ENCODE measurements at regions of chr1 and their contacts with region 1.

Region 1: DNA sequence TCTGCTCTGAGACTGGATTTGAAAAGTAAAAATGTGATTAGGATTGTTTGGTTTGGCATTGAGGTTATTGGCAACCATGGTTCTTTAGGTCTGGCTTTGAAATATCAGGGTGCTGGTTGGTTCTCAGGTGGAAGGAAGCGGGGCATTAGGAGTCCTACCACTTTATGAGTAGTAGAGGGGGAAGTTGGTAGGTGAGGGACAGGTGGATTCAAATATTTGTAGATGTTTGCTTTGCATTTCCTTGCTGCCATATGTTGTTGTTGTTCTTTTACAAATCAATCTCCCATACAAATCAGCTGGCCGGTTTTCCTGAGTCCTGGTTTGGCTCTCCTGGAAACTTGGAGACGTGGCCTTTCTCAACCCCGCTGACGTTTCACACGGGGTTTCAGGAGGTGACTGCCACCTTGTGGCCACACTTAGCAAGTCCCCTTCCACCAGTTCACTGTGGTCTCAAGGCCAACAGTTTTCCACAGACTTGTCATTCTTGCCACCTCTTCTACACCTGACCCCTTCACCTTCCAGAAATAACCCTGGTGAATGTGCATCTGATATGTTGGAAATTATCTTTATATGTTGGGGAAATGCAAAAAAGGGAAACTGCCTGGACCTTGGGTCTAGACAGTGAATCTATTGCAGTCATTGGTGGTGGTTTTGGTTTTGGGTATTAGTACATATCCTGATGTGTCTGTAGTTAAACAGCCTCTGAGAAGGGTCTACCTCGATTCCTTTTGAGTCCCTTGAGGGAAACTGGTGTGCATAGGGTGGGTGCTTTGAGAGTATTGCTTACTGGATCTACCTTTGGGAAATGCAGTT is 127.0 kb upstream of the KIAA0040 start:
- DNase-seq: peak; percentile 71
- CTCF ChIP-seq: peak; percentile 90

Region 2: DNA sequence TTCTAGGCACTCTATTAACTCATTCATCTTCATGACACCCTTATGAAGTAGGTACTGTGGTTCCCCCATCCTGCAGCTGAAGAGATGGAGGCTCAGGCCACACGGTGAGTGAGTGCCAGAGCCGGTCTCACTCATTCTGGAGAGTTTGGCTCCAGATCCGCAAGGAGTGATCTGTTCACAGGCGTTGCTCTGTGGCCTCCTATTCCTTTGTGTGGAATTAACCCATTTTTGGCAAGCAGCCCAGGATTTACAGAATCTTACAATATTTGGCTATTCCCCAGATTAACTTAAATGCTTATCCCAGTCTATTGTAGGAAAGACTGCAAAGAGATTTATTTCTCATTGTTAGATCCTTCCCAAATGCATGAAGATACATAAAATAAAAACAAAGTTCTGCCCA is 156.7 kb before region 1 on chr1:
- CTCF ChIA-PET with region 1: interaction called, 44 read pairs
- POLR2A ChIA-PET with region 1: no interaction called
- DNase-seq: no peak
- CTCF ChIP-seq: no peak

Region 3: GRCh38 chr1:175174309-175175165 is 145.1 kb before region 1 on chr1:
- CTCF ChIA-PET with region 1: interaction called, 10 read pairs
- POLR2A ChIA-PET with region 1: no interaction called
- DNase-seq: peak; percentile 27
- CTCF ChIP-seq: no peak

Region 4: DNA sequence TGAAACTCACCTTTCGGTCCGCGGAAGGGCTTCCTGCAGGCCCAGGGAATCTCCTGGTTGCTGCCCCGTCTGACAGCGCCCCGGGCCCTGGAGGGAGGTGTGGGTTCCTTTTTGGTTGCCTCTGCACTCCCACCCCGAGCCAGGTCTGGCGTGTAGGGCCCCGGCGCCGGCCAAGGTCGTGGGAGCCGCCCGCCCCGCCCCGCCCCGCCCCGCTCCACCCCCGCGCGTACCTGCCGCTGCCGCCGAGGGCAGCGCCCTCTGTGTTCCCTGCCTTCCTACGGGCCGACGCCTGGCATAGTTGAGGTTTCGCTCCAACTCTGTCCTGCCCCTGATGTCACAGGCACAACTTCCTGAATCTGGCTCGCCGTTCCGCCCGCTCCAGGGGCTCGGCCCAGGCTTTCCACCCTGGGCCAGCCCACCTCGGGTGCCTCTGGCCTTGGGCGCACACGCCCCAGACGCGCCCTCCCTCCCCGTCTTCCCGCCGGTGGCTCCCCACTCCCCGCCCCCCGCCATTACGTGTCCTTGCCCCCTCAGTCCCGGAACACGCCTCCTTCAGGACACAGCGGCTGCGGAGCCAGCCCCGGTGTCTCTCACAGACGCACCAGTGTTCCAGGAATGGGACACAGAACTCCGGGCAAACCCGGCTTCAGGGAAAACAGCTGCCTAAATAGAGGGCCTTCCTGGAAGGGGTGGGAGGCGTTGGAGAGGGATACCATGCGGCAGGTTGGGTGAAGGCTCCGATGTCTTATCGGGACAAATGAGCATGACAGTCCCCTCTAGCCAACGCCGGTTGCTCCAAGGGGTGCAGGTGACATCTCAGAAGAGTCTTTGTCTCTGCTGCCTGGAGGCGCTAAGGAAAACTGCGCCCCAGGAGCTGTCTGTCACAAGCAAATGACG is 126.7 kb before region 1 on chr1 and contains the start of gene KIAA0040:
- CTCF ChIA-PET with region 1: interaction called, 27 read pairs
- POLR2A ChIA-PET with region 1: no interaction called
- DNase-seq: peak; percentile 77
- CTCF ChIP-seq: peak; percentile 46

Region 5: DNA sequence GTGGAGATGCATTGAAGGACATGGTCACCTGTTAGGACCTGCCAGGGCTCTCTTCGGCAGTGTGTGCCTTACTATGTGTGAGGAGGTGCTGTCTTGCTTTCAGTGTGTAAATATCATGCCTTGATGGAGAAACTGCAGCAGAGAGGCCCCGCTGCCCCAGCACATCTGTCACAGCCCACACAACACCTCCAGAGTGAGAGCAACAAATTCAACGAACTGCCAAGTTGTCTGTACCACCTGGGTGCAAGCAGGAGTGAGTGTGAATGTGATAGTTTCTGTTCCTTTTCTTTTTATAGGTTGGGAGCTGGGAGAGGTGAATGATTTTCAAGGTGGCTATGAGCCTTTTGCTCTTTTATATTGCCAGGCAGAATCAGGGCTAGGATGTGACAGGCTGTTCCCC is 12.5 kb before region 1 on chr1:
- CTCF ChIA-PET with region 1: interaction called, 80 read pairs
- POLR2A ChIA-PET with region 1: no interaction called
- DNase-seq: peak; percentile 44
- CTCF ChIP-seq: no peak

Region 6: DNA sequence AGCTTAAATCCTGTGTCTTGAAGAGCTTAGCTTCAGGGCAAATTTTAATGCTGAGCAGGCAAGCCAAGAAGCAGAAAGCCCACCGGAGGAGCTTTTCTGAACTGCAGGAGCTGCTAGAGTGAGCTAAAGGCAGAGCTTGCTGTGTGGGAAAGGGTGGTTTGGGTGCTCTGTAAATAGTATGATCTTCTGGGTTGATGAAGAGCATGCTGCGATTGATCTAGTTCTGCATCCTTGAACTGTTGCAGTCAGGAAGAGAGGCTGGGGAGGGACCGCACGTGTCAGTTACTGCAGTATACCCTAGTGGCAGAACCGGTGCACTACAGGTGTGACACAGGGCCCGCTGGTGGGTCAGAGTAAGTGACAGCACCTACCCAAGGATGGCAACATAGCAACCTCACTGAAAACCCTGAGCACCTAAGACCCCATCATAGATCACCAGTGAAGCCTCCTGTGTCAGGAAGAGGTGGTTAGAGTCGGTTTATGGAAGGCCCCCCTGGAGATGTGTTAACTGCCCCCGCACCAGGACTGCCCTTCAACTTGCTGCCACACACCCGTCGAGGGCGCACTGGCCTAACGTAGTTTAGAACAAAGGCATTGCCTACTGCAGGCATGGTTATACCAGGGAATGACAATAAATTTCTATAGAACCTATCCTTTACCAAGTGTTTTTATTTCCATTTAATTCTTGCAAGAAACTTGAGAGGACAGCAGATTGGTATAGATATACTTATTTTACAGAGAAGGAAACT is 18.9 kb after region 1 on chr1:
- CTCF ChIA-PET with region 1: interaction called, 10 read pairs
- POLR2A ChIA-PET with region 1: no interaction called
- DNase-seq: peak; percentile 39
- CTCF ChIP-seq: peak; percentile 51